ENCODE measurements at regions of chr21 and their contacts with region 1.

Region 1: DNA sequence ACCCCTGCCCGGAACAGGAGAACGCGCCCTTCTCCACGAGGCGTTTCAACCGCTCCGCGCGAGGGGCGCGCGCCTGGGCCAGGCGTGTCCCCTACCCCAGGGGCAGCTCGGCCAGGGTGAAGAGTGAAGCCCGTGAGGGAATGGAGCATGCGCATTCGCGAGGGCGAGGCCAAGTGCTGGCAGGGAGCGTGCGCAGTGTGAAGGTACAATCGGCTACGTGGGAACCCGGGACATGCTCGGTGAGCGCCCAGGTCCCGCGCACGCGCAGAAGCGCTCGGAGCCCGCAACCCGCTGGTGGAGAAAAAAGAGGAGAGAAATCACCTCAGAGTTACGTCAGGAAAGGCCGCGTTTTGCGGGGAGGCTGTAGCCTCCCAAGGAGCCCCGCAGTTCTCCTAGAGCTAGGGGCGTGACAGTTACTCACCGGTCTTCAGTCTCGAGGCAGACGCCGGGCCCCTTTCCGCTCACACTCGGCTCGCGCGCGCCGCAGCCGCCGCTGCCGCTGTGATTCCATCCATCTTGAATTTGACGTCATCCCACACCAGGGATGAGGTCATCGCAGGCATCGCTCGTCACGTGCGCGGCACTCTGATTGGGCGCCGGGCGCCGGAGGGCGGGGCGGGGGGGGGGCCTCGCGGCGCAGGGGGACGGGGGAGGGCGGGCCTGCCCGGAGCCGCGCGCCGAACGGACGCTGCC is at the start of gene ZBTB21:
- DNase-seq: peak; percentile 98
- H3K4me3 ChIP-seq: peak within 1 kb of the TSS; percentile 37 to 83
- H3K4me3 Mint-ChIP-seq: peak within 1 kb of the TSS; percentile 96 to 100 (median 98)
- H3K27ac ChIP-seq: peak within 1 kb of the TSS; percentile 91
- H3K27ac Mint-ChIP-seq: peak within 1 kb of the TSS; percentile 100
- H3K4me1 ChIP-seq: peaks cover 19% of the 10 kb centered on the region
- H3K4me1 Mint-ChIP-seq: peaks cover 18 to 52% (median 27%) of the 10 kb centered on the region in 4 donors
- H3K27me3 ChIP-seq: no peaks in the 10 kb centered on the region
- H3K27me3 Mint-ChIP-seq: peaks cover 1 to 5% of the 10 kb centered on the region in 2 donors
- total RNA-seq, gene ZBTB21: 20.4 to 21.7 TPM

Region 2: DNA sequence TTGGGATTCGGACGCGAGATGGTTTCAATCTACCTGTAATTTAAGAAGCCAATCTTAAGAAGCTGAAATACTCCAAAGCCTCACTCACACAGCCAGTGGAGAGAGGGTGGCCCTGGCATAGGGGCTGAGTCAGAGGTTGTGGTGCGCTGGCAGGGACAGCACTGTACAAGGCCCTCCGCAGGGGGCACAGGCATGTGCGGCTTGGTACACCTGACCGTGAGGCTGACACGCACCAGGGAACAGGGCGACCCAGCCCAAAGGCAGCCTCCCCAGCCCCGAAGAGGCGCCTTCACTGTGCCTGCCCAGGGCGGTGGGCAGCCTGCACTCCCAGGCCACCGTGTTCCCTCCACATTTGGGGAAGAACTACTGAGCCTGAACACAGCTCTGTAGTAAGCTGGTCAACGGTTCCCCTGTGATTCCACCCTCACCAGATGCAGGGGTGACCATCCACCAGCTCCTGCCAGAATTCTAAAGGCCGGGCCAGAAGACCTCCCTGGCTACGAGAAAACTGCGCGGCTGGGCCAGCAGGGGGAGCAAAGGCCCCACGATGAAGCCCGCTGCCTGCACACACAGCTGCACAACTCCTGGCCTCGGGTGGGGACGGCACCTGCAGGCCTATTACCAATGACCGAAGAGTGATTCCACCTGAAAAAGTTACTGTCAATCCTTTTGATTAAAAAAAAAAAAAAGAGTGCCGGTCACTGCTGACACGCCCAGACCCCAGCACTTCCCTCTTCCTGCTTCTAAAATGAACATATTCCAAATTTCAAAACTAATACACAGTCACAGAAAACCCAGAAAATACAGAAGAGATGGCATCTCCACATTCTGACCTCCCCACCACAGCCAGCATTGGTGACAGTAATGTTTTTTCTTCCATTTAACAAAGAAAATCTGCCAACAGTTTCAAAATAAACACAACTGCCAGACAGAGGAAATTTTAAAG is 193.5 kb before region 1 on chr21:
- CTCF ChIA-PET with region 1: no interaction called
- POLR2A ChIA-PET with region 1: no interaction called
- intact Hi-C with region 1: loop called (anchors 2 kb)
- DNase-seq: peak; percentile 41 to 54 (median 46)
- H3K4me3 ChIP-seq: no peak overlapping the region
- H3K4me3 Mint-ChIP-seq: no peak overlapping the region
- H3K27ac ChIP-seq: no peak overlapping the region
- H3K27ac Mint-ChIP-seq: peak overlapping the region in 2 of 7 donors; percentile 31 to 47
- H3K4me1 ChIP-seq: no peaks in the 10 kb centered on the region
- H3K4me1 Mint-ChIP-seq: peaks cover 0 to 8% (median 2%) of the 10 kb centered on the region in 4 donors
- H3K27me3 ChIP-seq: no peaks in the 10 kb centered on the region
- H3K27me3 Mint-ChIP-seq: no peaks in the 10 kb centered on the region

Region 3: GRCh38 chr21:42097860-42098454 is 88.0 kb after region 1 on chr21:
- CTCF ChIA-PET with region 1: no interaction called
- POLR2A ChIA-PET with region 1: no interaction called
- intact Hi-C with region 1: no loop called
- DNase-seq: no peak
- H3K4me3 ChIP-seq: no peak overlapping the region
- H3K4me3 Mint-ChIP-seq: no peak overlapping the region
- H3K27ac ChIP-seq: no peak overlapping the region
- H3K27ac Mint-ChIP-seq: peak overlapping the region in 1 of 7 donors; percentile 21
- H3K4me1 ChIP-seq: no peaks in the 10 kb centered on the region
- H3K4me1 Mint-ChIP-seq: no peaks in the 10 kb centered on the region
- H3K27me3 ChIP-seq: no peaks in the 10 kb centered on the region
- H3K27me3 Mint-ChIP-seq: peaks cover 2 to 5% of the 10 kb centered on the region in 2 donors